ENCODE measurements at regions of chr10 and their contacts with region 1.

Region 1: DNA sequence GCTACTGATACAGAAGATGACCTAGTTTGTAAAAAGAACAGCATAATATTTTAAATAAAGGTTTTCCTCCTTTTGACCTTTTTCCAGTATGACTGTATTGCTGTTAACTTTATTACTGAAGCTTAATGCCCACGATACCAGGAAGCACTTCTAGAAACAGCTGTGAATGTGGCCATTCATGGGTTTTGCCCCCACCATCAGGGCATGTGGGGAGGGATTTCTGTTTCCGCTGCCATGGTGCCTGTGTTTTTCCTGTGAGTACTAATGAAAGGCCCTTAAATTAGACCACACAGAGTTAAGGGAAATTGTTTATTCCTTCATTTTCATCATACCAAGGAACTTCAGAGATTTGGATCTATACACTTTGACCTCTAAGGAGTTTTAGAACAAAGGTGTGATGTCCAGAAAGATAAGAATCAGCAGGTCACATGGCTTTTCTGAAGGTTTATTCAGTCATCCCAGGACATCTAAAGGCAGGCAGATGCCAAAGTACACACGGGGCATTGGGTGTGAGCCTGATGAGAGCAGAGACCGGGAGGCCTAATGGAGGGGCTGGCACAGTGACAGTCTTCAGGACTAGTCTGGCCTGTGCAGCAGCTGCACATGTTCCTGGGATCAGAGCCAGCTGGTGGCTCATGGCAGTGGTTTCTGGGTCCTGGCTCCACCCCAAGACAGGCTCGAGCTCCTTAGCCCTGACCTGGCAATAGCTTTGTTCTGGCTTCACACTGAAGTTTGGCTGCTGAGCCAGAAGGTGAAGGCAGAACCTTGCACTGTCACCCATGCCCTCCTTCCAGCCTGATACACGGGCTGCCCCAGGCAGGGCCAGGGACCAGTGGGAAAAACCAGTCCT is 190.9 kb downstream of the REEP3 start:
- DNase-seq: peak; percentile 95
- ATAC-seq: peak; percentile 94

Region 2: GRCh38 chr10:63241841-63242281 is 470.2 kb before region 1 on chr10:
- intact Hi-C with region 1: no loop called
- DNase-seq: no peak
- ATAC-seq: no peak

Region 3: GRCh38 chr10:63629363-63630084 is 82.6 kb before region 1 on chr10:
- intact Hi-C with region 1: loop called (anchors 5 kb)
- DNase-seq: peak; percentile 97
- ATAC-seq: peak; percentile 82